ENCODE measurements at regions of chr1 and their contacts with region 1.

Region 1: GRCh38 chr1:67159233-67159632 is 7.0 kb upstream of the IL23R start:
- DNase-seq: no peak
- ATAC-seq: no peak
- H3K4me3 ChIP-seq: no peak overlapping the region
- H3K27ac ChIP-seq: no peak overlapping the region
- H3K4me1 ChIP-seq: no peaks in the 10 kb centered on the region
- H3K27me3 ChIP-seq: no peaks in the 10 kb centered on the region
- CTCF ChIP-seq: no peak
- POLR2A ChIP-seq: no peak

Region 2: DNA sequence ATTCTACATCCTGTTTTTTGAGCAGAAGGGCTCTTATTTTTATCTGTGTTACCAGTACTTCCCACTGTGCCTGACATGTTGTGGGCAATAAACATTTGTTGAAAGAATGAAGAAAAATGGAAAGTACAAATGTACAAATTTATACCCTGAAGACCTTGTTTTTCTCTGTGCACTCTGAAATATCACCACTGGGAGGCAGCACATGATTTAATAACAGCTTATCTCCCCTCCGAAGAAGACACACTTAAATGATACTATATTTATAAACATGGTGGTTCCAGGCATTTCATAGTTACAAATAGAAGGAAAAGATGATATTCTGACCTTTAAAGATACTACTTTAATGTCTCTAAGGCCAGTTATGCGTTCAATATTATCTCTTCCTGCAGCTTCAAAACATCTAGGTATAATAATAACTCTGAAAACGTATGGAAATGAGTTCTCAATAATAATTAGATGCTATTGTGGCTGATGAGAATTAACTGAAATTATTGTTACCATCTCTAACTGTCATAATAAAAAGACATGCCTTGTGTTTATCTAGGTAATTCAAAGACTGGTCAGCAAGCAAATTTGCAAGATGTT is 394.1 kb before region 1 on chr1:
- intact Hi-C with region 1: loop called (anchors 10 kb)
- DNase-seq: peak; percentile 34 to 62 (median 52)
- ATAC-seq: peak; percentile 50
- H3K4me3 ChIP-seq: no peak overlapping the region
- H3K27ac ChIP-seq: no peak overlapping the region
- H3K4me1 ChIP-seq: no peaks in the 10 kb centered on the region
- H3K27me3 ChIP-seq: no peaks in the 10 kb centered on the region
- CTCF ChIP-seq: peak in 6 of 7 experiments; percentile 49 to 75 (median 65)
- POLR2A ChIP-seq: no peak